Posterior cingulate gyrus (tissue), 11 donors: ENCODE measurements at regions of chr5 and their contacts with region 1.

Region 1: DNA sequence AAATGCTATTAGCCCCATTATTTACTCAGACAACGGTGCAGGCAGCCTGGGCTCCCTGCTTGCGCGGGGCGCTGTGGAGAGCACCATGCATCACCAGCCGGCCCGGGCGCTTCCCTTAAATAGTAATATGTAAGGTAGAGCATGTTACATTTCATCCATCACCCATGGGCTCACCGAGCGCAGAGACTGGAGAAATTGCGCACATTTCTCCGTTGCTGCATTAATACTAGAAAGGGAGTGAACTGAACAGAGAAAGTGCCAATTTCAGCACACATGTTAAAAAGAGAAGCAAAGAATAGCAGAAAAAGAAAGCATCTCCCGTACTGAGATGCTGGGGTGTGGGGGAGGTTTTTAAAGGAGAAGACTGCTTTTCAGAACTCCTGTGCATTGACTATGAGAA is 400.3 kb downstream of the ZSWIM6 start:
- DNase-seq: peak; percentile 22 to 93 (median 64)

Region 2: DNA sequence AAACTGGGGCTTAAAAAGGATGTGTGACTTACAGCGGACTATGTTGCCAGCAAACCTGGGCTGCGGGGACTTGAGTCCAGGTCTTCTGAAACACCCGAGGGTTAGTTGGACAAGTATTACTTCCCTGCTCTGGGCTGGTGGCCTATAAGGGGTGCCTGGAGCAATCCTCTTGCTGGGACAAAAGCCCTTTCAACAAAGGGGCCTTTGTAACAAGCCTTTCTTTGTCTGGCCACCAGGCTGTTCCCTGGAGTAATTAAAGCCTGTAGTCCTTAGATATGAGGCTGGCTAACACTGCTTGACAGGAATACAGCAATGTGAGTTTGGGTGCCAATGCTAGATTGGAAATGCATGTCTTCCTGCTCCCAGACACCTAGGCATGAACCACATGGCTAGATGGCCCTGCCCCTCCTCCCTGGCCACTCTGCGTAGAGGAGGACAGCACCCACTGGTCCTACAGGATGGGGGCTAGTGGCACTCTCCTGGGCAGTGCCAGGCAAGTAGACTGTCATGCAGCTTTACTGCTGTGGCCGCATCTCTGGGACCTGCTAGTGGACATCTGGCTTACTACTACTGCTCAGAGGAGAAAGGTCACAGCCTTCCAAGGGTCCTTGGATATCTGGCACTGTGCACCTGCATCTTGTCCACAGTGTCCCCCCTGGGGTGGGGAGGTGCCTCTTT is 57.2 kb before region 1 on chr5:
- intact Hi-C with region 1: loop called (anchors 5 kb)
- DNase-seq: peak in 6 of 10 donors; percentile 21 to 86 (median 54)

Region 3: GRCh38 chr5:61775906-61776305 is 43.5 kb after region 1 on chr5:
- intact Hi-C with region 1: no loop called
- DNase-seq: no peak